ENCODE measurements at regions of chr22 and their contacts with region 1.

Region 1: GRCh38 chr22:18136563-18137320 is 13.2 kb upstream of the USP18 start:
- DNase-seq: no peak
- H3K4me3 ChIP-seq: no peak overlapping the region
- H3K27ac ChIP-seq: no peak overlapping the region
- H3K4me1 ChIP-seq: no peaks in the 10 kb centered on the region
- H3K27me3 ChIP-seq: no peaks in the 10 kb centered on the region
- CTCF ChIP-seq: no peak
- EP300 ChIP-seq: no peak
- POLR2A ChIP-seq: no peak

Region 2: DNA sequence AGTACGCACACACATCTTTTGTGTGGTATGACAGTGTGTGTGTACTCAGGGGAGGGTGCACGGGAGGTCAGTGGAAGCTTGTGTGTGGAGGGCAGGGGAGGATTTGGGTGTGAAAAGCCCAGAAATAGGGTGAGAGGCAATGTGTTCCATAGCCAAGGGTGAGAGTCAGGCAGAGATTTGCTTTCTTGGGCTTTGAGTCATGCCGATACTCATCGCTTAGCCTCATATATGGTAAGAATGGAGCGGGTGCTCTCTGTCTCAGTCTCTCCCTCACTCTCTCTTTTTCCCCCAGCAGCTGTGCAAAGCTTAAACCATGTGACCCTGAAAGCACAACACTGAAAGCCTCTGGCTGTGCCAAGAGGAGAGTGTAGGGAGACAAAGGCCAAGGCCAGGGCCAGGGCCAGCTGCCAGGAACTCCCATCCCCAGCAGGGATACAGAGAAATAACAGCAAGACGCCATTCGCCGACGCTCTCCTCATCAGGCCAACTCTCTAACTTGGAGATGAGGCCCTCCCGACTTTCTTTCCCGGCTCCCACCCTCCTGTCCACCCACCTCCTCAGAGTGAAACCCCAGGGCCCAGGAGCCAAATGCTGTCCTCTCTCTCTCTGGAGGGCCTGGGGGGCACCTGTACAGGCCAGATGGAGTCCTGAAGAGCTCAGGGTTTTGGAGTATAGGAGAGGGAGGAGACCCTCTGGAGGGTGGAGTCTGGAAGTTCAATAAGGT is 92.0 kb before region 1 on chr22:
- intact Hi-C with region 1: no loop called
- DNase-seq: no peak
- H3K4me3 ChIP-seq: no peak overlapping the region
- H3K27ac ChIP-seq: peak overlapping the region; percentile 38 to 81 (median 72)
- H3K4me1 ChIP-seq: peaks cover 0 to 21% (median 13%) of the 10 kb centered on the region in 4 donors
- H3K27me3 ChIP-seq: no peaks in the 10 kb centered on the region
- CTCF ChIP-seq: no peak
- EP300 ChIP-seq: no peak
- POLR2A ChIP-seq: no peak

Region 3: GRCh38 chr22:18065256-18065655 is 71.5 kb before region 1 on chr22:
- intact Hi-C with region 1: no loop called
- DNase-seq: no peak
- H3K4me3 ChIP-seq: no peak overlapping the region
- H3K27ac ChIP-seq: peak overlapping the region in 3 of 4 donors; percentile 9 to 95 (median 89)
- H3K4me1 ChIP-seq: peaks cover 0 to 83% (median 53%) of the 10 kb centered on the region in 4 donors
- H3K27me3 ChIP-seq: no peaks in the 10 kb centered on the region
- CTCF ChIP-seq: no peak
- EP300 ChIP-seq: no peak
- POLR2A ChIP-seq: no peak

Region 4: GRCh38 chr22:18075720-18076497 is 60.8 kb before region 1 on chr22:
- intact Hi-C with region 1: no loop called
- DNase-seq: peak; percentile 88
- H3K4me3 ChIP-seq: no peak overlapping the region
- H3K27ac ChIP-seq: peak overlapping the region; percentile 80 to 86 (median 83)
- H3K4me1 ChIP-seq: peaks cover 0 to 42% (median 38%) of the 10 kb centered on the region in 4 donors
- H3K27me3 ChIP-seq: no peaks in the 10 kb centered on the region
- CTCF ChIP-seq: peak; percentile 78 to 89 (median 86)
- EP300 ChIP-seq: no peak
- POLR2A ChIP-seq: no peak

Region 5: DNA sequence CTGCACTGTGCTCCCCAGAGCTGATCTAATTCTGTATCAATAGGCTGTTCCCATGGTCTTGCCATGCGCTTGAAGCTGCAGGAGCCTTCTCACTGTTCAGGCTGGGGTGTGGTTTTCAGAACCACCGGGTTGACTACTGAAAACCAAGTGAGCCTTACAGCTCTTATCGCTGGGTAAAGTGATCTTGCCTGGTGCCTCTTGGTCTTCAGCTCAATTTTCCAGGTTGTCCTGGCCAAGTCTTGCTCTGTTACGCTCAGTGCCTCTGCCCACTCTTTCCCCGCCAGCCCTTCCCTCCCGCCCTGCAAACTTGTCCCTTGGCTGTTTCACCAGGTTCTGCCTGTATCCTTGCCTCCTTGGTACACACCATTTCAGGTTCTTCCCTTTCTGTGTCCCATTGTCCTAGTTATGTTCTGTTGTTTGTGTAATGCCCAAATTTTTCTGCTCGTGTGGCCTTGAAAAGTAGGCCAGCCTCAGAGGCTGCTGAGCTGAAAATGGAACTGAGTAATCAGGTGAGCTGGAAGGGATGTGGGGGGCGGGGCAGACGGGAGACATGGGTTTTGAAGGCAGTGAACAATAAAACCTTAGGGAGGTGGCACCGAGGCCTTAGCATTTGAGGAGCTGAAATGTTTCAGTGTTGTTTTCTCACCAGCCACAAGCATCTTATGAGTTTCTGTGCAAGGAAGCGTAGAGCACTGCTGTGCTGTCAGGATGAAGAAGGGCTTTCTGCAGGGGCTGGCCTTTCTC is 47.7 kb before region 1 on chr22:
- intact Hi-C with region 1: loop called (anchors 5 kb)
- DNase-seq: no peak
- H3K4me3 ChIP-seq: no peak overlapping the region
- H3K27ac ChIP-seq: no peak overlapping the region
- H3K4me1 ChIP-seq: peaks cover 0 to 21% (median 18%) of the 10 kb centered on the region in 4 donors
- H3K27me3 ChIP-seq: no peaks in the 10 kb centered on the region
- CTCF ChIP-seq: no peak
- EP300 ChIP-seq: no peak
- POLR2A ChIP-seq: no peak

Measured in sigmoid colon (tissue), 7 donors.